Panc1 (cell line): ENCODE measurements at regions of chr17 and their contacts with region 1.

Region 1: GRCh38 chr17:70552230-70552981 is 383.1 kb downstream of the KCNJ2 start:
- DNase-seq: peak; percentile 15
- ATAC-seq: no peak; the same call in 1 of the 2 replicates
- H3K4me3 ChIP-seq: no peak overlapping the region
- H3K27ac ChIP-seq: no peak overlapping the region
- H3K4me1 ChIP-seq: 0 out of 2 replicates have a peak, but pooled peaks cover 3% of the 10 kb centered on the region
- H3K27me3 ChIP-seq: no peaks in the 10 kb centered on the region
- CTCF ChIP-seq: peak; percentile 70

Region 2: DNA sequence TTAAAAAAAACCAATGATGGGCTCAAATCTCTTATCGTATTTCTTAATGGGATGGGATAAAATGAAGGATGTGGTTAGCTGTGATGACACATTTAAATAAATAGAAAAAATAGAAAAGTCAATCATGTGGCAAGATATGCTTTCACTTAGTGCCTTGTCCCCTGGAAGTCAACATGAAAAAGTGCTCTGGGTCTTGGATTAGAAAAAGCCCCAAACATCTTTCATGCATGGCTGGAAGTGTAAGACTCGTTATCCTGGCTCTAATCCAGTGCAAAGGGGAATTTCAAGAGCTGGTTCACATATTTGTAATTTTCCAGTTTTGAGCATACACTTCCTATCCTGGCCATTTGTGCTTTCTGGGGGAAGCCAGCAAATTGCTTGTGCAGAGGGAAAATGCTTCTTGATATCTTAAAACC is 977.1 kb before region 1 on chr17:
- CTCF ChIA-PET with region 1: no interaction called
- POLR2A ChIA-PET with region 1: no interaction called
- in situ Hi-C with region 1: no loop called
- intact Hi-C with region 1: loop called (anchors 10 kb)
- DNase-seq: no peak
- ATAC-seq: peak; percentile 65
- H3K4me3 ChIP-seq: no peak overlapping the region
- H3K27ac ChIP-seq: no peak overlapping the region
- H3K4me1 ChIP-seq: peaks cover 6% of the 10 kb centered on the region; the same call in 1 of the 2 replicates
- H3K27me3 ChIP-seq: no peaks in the 10 kb centered on the region
- CTCF ChIP-seq: no peak

Region 3: GRCh38 chr17:70168977-70169708 is 383.3 kb before region 1 on chr17 and contains the start of gene KCNJ2:
- CTCF ChIA-PET with region 1: interaction called, 4 read pairs
- POLR2A ChIA-PET with region 1: no interaction called
- in situ Hi-C with region 1: no loop called
- intact Hi-C with region 1: loop called (anchors 10 kb)
- DNase-seq: no peak
- ATAC-seq: peak; percentile 97
- H3K4me3 ChIP-seq: peak within 1 kb of the TSS; percentile 64 to 67
- H3K27ac ChIP-seq: peak within 1 kb of the TSS; percentile 72
- H3K4me1 ChIP-seq: peaks cover 12% of the 10 kb centered on the region
- H3K27me3 ChIP-seq: peaks cover 32% of the 10 kb centered on the region
- CTCF ChIP-seq: no peak
- total RNA-seq, gene KCNJ2: 1.5 TPM